ENCODE measurements at regions of chr14 and their contacts with region 1.

Region 1: GRCh38 chr14:50231475-50232275 is at the start of gene SOS2:
- DNase-seq: peak; percentile 78
- ATAC-seq: peak; percentile 95
- H3K4me3 ChIP-seq: peak within 1 kb of the TSS; percentile 77 to 90 (median 87)
- H3K27ac ChIP-seq: peak within 1 kb of the TSS; percentile 97
- H3K4me1 ChIP-seq: peaks cover 37% of the 10 kb centered on the region
- H3K27me3 ChIP-seq: no peaks in the 10 kb centered on the region
- CTCF ChIP-seq: peak; percentile 51
- EP300 ChIP-seq: no peak
- POLR2A ChIP-seq: peak; percentile 73 to 97
- RAD21 ChIP-seq: 0 out of 2 replicates have a peak, but pooled peaks have one; percentile 3
- total RNA-seq, gene SOS2: 12.1 and 14.9 TPM in 2 replicates

Region 2: DNA sequence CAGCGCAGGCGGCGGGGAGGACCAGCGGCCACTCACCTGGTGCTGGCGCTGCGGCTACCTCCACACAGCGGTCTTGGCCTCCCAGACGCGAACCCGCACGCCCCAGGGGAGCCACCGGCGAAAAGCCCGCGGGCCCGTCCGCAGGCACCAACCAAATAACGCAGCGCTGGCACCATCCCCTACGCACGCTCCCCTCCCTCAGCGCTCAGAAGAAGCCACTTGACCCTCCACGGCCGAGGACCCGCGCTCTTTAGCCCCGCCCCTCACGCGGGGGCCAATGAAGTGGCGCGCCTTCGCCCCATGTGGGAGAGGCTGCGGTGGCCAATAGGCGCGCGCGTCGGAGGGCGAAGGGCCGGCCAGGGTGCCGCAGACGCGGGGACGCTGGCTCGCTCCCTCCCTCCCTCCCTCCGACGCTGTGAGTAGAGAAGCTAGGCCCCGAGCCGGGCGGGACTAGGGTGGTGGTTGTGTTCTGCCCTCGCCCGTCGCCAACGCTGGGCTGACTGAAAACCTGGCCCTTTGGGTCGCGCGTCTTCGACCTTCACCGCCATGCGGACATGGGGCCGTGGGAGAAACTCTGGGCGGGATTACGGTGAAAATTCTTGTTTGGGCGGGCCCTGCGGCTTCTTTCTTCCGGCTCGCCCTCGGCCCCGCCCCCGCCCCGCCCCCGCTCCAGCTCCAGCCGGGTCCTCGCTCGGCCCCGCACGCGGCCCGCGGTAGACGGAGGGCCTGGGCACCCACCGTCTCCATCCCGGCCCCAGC is 80.5 kb after region 1 on chr14 and contains the starts of genes DMAC2L and L2HGDH:
- CTCF ChIA-PET with region 1: no interaction called
- POLR2A ChIA-PET with region 1: interaction called, 5 read pairs
- in situ Hi-C with region 1: no loop called
- intact Hi-C with region 1: loop called (anchors 2 kb)
- DNase-seq: peak; percentile 91
- ATAC-seq: peak; percentile 95
- H3K4me3 ChIP-seq: peak within 1 kb of the TSS; percentile 72 to 86 (median 83)
- H3K27ac ChIP-seq: peak within 1 kb of the TSS; percentile 92
- H3K4me1 ChIP-seq: peaks cover 22% of the 10 kb centered on the region
- H3K27me3 ChIP-seq: no peaks in the 10 kb centered on the region; a peak in 1 of 5 replicates
- CTCF ChIP-seq: peak; percentile 68
- EP300 ChIP-seq: no peak
- POLR2A ChIP-seq: peak; percentile 83 to 96
- RAD21 ChIP-seq: peak; percentile 52; the same call in 1 of the 2 replicates
- total RNA-seq, gene DMAC2L: 19.4 and 27.4 TPM in 2 replicates
- total RNA-seq, gene L2HGDH: 5.0 and 7.4 TPM in 2 replicates